Heart left ventricle (tissue), 16 donors: ENCODE measurements at regions of chr2 and their contacts with region 1.

Region 1: DNA sequence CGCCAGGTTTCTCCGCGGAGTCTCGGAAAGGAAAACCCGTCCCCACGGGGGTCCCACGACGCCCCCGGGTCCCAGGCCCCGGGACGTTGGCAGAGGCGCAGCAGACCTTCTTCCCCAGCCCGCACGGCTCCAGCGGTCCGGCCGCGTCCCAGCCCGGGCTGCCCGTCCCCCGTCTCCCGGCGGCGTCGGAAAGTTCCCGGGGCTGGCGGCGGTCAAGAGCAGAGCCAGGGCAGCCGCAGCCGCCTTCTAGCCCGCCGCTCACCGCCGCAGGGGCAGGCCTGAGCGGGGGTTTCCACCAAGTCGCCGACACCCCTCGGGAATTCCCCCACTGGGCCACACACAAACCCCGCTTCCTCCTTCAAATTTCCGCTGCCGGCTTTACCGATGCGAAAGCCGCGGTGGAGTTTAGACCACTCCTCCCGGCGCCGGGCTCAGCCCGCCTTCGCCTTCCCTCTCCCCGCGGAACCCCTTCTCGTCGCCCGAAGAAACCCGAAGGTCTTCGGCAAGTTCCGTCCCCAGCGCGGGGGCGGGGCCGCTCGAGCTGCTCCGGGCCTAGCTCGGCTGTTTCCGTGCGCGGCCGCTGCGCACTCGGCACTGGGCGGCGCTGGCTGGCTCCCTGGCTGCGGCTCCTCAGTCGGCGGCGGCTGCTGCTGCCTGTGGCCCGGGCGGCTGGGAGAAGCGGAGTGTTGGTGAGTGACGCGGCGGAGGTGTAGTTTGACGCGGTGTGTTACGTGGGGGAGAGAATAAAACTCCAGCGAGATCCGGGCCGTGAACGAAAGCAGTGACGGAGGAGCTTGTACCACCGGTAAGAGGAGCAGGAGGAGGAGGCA is at the start of gene CREB1:
- DNase-seq: peak; percentile 98 to 100 (median 99)
- ATAC-seq: peak; percentile 93 to 97 (median 96)
- H3K4me3 ChIP-seq: peak within 1 kb of the TSS; percentile 58 to 94 (median 80)
- H3K27ac ChIP-seq: peak within 1 kb of the TSS; percentile 91 to 100 (median 98)
- H3K4me1 ChIP-seq: peaks cover 0 to 62% (median 40%) of the 10 kb centered on the region in 12 donors
- H3K27me3 ChIP-seq: no peaks in the 10 kb centered on the region
- CTCF ChIP-seq: peak in 3 of 12 donors; percentile 11 to 34 (median 21)
- POLR2A ChIP-seq: peak; percentile 92 to 99
- total RNA-seq, gene CREB1: 32.1 to 58.9 (median 49.3) TPM

Region 2: GRCh38 chr2:207484444-207485391 is 44.8 kb before region 1 on chr2:
- intact Hi-C with region 1: loop called in 2 of 10 experiments (anchors 5 kb)
- DNase-seq: no peak
- ATAC-seq: peak; percentile 40 to 68 (median 53)
- H3K4me3 ChIP-seq: no peak overlapping the region
- H3K27ac ChIP-seq: peak overlapping the region; percentile 37 to 90 (median 76)
- H3K4me1 ChIP-seq: peaks cover 0 to 41% (median 12%) of the 10 kb centered on the region in 12 donors
- H3K27me3 ChIP-seq: no peaks in the 10 kb centered on the region
- CTCF ChIP-seq: no peak
- POLR2A ChIP-seq: no peak

Region 3: DNA sequence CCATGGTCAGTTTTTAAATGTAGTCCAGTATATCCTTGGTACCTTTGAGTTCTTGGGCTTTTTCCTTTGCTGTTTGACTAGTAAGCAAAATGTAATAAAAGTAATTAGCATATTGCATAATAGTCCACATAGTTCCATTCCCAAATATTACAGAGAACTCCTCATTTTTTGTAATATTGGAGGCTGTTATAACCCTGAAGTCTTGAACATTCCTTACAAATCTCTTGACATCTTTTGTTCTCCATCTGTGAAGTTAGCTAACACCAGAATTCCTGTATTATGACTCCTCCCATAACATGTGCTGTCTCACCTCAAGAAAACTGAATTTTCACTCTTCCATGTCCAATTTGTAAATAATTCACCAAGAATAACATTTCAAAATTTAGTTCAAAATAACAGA is 17.3 kb after region 1 on chr2:
- intact Hi-C with region 1: loop called in 1 of 10 experiments (anchors 2 kb)
- DNase-seq: no peak
- ATAC-seq: no peak
- H3K4me3 ChIP-seq: no peak overlapping the region
- H3K27ac ChIP-seq: no peak overlapping the region
- H3K4me1 ChIP-seq: peaks cover 0 to 53% (median 35%) of the 10 kb centered on the region in 12 donors
- H3K27me3 ChIP-seq: no peaks in the 10 kb centered on the region
- CTCF ChIP-seq: no peak
- POLR2A ChIP-seq: no peak

Region 4: GRCh38 chr2:207625018-207625907 is 95.7 kb after region 1 on chr2 and contains the start of gene METTL21A:
- intact Hi-C with region 1: loop called in 8 of 10 experiments (anchors 1 to 10 kb)
- DNase-seq: peak; percentile 89 to 95 (median 92)
- ATAC-seq: peak; percentile 82 to 96 (median 90)
- H3K4me3 ChIP-seq: peak within 1 kb of the TSS; percentile 60 to 98 (median 92)
- H3K27ac ChIP-seq: peak within 1 kb of the TSS; percentile 87 to 99 (median 94)
- H3K4me1 ChIP-seq: peaks cover 0 to 41% (median 15%) of the 10 kb centered on the region in 12 donors
- H3K27me3 ChIP-seq: no peaks in the 10 kb centered on the region
- CTCF ChIP-seq: peak in 11 of 12 donors; percentile 6 to 61 (median 36)
- POLR2A ChIP-seq: peak; percentile 25 to 86
- total RNA-seq, gene METTL21A: 10.2 to 27.6 (median 14.6) TPM

Region 5: GRCh38 chr2:207734264-207734635 is 204.7 kb after region 1 on chr2:
- intact Hi-C with region 1: loop called in 1 of 10 experiments (anchors 10 kb)
- DNase-seq: no peak
- ATAC-seq: peak; percentile 59 to 81 (median 70)
- H3K4me3 ChIP-seq: no peak overlapping the region
- H3K27ac ChIP-seq: no peak overlapping the region
- H3K4me1 ChIP-seq: no peaks in the 10 kb centered on the region
- H3K27me3 ChIP-seq: no peaks in the 10 kb centered on the region
- CTCF ChIP-seq: peak; percentile 22 to 56 (median 38)
- POLR2A ChIP-seq: no peak